Body of pancreas (tissue), 4 donors: ENCODE measurements at regions of chr6 and their contacts with region 1.

Region 1: DNA sequence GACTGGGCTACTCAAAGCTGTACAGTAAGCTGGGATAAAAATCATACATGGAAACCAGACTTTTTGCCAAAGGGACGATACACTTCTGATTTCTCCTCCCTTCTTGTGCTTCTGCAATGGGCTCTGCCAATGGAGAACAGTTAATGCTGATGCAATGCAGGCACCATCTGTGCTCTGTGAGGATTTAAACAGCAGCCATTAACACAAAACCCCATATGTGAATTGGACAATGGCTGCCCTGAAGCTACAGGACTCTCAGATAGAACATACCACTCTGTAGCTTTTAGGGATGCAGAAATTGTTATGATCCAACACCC is 71.9 kb downstream of the GJA10 start:
- DNase-seq: no peak
- ATAC-seq: no peak
- H3K4me3 ChIP-seq: no peak overlapping the region
- H3K27ac ChIP-seq: no peak overlapping the region
- H3K4me1 ChIP-seq: no peaks in the 10 kb centered on the region
- H3K27me3 ChIP-seq: no peaks in the 10 kb centered on the region
- CTCF ChIP-seq: no peak
- POLR2A ChIP-seq: no peak

Region 2: GRCh38 chr6:90319044-90319443 is 352.9 kb after region 1 on chr6:
- intact Hi-C with region 1: loop called (anchors 10 kb)
- DNase-seq: no peak
- ATAC-seq: no peak
- H3K4me3 ChIP-seq: no peak overlapping the region
- H3K27ac ChIP-seq: no peak overlapping the region
- H3K4me1 ChIP-seq: no peaks in the 10 kb centered on the region
- H3K27me3 ChIP-seq: no peaks in the 10 kb centered on the region
- CTCF ChIP-seq: no peak
- POLR2A ChIP-seq: no peak

Region 3: DNA sequence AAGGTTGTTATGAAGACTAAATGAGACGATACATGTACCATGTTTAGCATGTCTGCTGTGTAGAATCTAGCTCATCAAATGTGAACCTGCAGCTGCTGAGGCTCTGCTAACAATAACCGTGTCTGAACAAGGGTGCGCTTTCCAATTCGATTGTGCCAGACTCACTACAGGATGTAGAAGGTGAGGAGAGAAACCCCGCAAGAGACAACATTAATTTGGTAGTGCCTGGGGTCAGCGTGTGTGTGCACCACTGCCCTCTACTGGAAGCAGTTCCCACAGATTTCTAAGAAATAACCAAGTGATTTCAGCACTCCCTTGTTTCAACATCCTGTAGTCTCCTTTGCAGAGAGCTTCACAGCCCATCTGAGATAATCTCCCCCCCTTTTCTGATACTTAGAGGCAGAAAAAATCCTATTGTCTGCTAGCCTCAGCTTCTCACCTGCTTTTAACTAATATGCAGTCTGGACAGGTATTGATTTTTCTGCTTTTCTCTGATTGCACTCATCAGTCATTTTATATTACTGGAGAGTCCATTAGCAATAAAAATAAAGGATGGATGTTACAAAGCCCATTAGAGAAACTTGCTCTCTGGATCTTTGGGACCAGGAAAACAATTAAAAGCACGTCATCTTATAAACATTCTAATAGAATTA is 427.2 kb after region 1 on chr6:
- intact Hi-C with region 1: loop called (anchors 10 kb)
- DNase-seq: peak; percentile 59 to 67 (median 62)
- ATAC-seq: peak; percentile 62
- H3K4me3 ChIP-seq: no peak overlapping the region
- H3K27ac ChIP-seq: no peak overlapping the region
- H3K4me1 ChIP-seq: peaks cover 7% of the 10 kb centered on the region
- H3K27me3 ChIP-seq: no peaks in the 10 kb centered on the region
- CTCF ChIP-seq: peak; percentile 56 to 76 (median 70)
- POLR2A ChIP-seq: no peak